SK-N-SH (cell line): ENCODE measurements at regions of chr1 and their contacts with region 1.

Region 1: DNA sequence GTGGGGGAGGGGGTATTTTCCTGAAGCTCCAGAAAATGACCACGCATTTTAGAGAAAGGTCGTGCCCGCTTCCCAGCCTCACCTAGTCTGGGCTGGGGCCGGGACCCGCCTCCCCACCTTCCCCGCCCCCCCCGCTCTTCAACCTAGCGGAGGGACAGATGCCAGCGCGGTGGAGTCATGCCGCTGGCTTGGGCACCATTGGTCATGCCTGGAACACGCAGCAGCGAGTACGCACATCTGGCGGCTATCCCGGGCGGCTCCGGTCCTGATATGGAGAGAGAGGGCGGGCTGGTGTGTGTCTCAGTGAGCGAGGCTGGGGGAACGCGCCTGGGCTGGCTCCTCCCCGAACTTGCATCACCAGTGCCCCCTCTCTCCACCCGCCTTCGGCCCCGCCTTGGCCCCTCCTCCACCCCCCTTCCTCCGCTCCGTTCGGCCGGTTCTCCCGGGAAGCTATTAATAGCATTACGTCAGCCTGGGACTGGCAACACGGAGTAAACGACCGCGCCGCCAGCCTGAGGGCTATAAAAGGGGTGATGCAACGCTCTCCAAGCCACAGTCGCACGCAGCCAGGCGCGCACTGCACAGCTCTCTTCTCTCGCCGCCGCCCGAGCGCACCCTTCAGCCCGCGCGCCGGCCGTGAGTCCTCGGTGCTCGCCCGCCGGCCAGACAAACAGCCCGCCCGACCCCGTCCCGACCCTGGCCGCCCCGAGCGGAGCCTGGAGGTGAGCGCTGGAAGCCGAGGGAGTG is at the start of gene ATF3:
- DNase-seq: peak; percentile 98
- H3K4me3 ChIP-seq: peak within 1 kb of the TSS; percentile 67 to 71
- H3K27ac ChIP-seq: peak within 1 kb of the TSS; percentile 78 to 86
- H3K4me1 ChIP-seq: peaks cover 4 to 32% of the 10 kb centered on the region in 2 experiments; a peak in 2 of 4 replicates
- H3K27me3 ChIP-seq: peaks cover 42% of the 10 kb centered on the region
- CTCF ChIP-seq: no peak
- EP300 ChIP-seq: no peak
- RAD21 ChIP-seq: no peak
- polyA plus RNA-seq, gene ATF3: 29.7 TPM in 2 replicates

Region 2: GRCh38 chr1:212545941-212546635 is 62.3 kb before region 1 on chr1:
- CTCF ChIA-PET with region 1: no interaction called
- POLR2A ChIA-PET with region 1: no interaction called
- DNase-seq: no peak
- H3K4me3 ChIP-seq: no peak overlapping the region
- H3K27ac ChIP-seq: no peak overlapping the region
- H3K4me1 ChIP-seq: no peaks in the 10 kb centered on the region
- H3K27me3 ChIP-seq: no peaks in the 10 kb centered on the region; the same call in 1 of the 2 replicates
- CTCF ChIP-seq: no peak
- EP300 ChIP-seq: no peak
- RAD21 ChIP-seq: no peak

Region 3: DNA sequence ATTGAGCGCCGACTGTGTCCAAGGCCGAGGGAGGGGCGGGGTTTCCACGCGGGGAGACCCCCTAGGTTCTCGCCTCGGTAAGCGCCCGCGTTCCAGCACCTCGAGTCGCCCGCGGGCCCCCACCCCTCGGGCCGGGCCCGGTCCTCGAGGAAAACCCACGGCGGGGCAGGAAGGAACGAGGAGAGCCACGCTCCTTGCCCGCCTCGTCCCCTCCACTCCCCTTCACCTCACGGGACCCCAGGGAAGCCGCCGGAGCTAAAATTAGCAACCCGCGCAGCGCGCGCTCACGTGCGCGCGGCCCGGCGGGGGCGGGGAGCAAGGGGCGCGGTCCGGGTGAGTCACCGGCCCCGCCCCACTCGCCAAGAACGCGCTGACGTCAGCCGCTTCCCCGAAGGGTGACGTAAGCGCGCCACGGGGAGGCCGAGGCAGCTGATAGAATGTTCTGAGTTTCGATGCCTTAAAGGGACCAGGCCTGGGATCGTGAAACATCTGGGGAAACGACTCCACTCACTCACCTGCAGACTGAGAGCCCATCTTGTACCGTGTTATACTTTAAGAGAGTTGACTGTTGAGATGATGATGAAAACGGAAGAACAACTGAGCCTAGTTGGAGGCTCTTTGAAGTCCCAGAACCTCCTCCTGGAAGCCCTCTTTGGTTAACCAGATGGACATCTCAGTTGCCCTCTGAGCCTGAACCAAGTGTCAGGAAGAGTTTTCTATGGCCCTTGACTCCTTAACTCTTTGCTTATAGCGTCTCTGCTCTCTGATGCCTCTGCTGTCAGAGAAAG is 49.5 kb before region 1 on chr1:
- CTCF ChIA-PET with region 1: interaction called, 5 read pairs
- POLR2A ChIA-PET with region 1: interaction called, 17 read pairs
- DNase-seq: peak; percentile 97
- H3K4me3 ChIP-seq: peak overlapping the region; percentile 64 to 78
- H3K27ac ChIP-seq: peak overlapping the region; percentile 37 to 85; a peak in 3 of 4 replicates
- H3K4me1 ChIP-seq: peaks cover 0 to 16% of the 10 kb centered on the region in 2 experiments; a peak in 1 of 4 replicates
- H3K27me3 ChIP-seq: no peaks in the 10 kb centered on the region
- CTCF ChIP-seq: no peak
- EP300 ChIP-seq: no peak; a peak in 1 of 4 replicates
- RAD21 ChIP-seq: no peak

Region 4: DNA sequence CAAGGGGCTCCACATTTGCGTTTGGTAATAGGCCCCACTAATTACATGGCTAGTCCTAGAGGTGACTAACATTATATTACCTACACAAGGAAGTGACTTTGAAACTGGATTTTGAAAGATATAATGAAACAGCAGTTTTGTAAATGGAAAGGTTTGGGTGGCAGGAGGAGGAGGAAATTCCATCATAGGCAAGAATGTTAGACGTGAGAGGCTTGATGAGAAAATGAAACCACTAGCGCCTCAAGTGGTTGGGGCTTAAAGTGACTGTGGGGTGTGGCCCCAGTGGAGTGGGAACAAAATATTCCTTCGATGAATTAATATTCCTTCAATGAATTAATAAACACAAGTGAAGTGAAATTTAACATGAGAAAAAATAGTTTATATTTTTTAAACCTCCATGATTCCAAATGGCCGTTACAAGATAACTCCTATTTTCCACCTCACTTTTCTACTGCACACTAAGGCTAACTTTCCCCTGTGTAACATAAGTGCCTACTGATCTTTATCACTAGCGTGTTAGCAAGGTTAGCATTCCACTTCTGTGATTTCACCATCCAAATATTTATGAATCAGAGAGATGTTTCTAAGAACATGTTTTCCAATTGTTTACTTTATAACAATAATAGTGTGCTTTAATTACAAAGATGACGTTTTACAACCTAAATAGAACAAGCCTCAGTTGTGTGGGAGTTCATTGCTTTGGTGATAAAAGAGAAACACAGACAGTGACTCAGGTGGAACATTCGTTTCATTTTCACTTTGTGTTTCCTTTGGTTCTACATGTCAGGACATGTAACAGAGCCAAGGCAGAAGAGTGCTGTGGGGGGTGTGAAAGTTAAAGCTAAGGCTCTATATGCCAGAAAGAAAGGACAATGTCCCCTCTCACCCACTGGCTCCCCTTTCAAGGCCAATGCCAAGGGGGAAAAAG is 12.3 kb before region 1 on chr1:
- CTCF ChIA-PET with region 1: interaction called, 13 read pairs
- POLR2A ChIA-PET with region 1: interaction called, 5 read pairs
- DNase-seq: no peak
- H3K4me3 ChIP-seq: peak overlapping the region; percentile 7 to 22; a peak in 3 of 4 replicates
- H3K27ac ChIP-seq: peak overlapping the region; percentile 78 to 86
- H3K4me1 ChIP-seq: peaks cover 6 to 27% of the 10 kb centered on the region in 2 experiments; a peak in 3 of 4 replicates
- H3K27me3 ChIP-seq: no peaks in the 10 kb centered on the region; the same call in 1 of the 2 replicates
- CTCF ChIP-seq: peak; percentile 68
- EP300 ChIP-seq: peak in 1 of 2 experiments; percentile 66; a peak in 2 of 4 replicates
- RAD21 ChIP-seq: 0 out of 2 replicates have a peak, but pooled peaks have one; percentile 3

Region 5: DNA sequence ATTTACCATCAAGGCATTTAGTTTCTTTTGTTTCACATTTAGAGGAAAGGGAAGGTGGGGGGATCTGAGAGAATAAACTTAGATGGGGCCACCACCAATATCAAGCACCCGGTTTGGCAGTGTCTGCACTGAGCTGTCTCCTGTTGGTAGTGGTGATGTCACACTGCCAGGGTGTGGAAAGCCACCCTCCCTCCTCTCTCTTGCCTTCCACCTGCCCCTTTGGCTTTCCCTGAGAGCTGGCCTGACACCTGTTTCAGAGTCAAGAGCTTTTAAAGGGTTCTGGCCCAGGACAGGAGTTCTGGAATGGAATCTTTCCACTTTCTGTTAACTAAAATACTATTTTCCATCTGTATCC is 13.5 kb after region 1 on chr1:
- CTCF ChIA-PET with region 1: interaction called, 20 read pairs
- POLR2A ChIA-PET with region 1: interaction called, 4 read pairs
- DNase-seq: no peak
- H3K4me3 ChIP-seq: no peak overlapping the region
- H3K27ac ChIP-seq: no peak overlapping the region
- H3K4me1 ChIP-seq: no peaks in the 10 kb centered on the region
- H3K27me3 ChIP-seq: peaks cover 11% of the 10 kb centered on the region; the same call in 1 of the 2 replicates
- CTCF ChIP-seq: no peak
- EP300 ChIP-seq: no peak
- RAD21 ChIP-seq: no peak

Region 6: GRCh38 chr1:212630158-212630900 is 21.9 kb after region 1 on chr1:
- CTCF ChIA-PET with region 1: interaction called, 14 read pairs
- POLR2A ChIA-PET with region 1: interaction called, 10 read pairs
- DNase-seq: peak; percentile 75
- H3K4me3 ChIP-seq: no peak overlapping the region; a peak in 1 of 4 replicates
- H3K27ac ChIP-seq: no peak overlapping the region
- H3K4me1 ChIP-seq: peaks cover 0 to 20% of the 10 kb centered on the region in 2 experiments; a peak in 2 of 4 replicates
- H3K27me3 ChIP-seq: peaks cover 55% of the 10 kb centered on the region
- CTCF ChIP-seq: peak; percentile 70
- EP300 ChIP-seq: no peak
- RAD21 ChIP-seq: peak; percentile 62

Region 7: DNA sequence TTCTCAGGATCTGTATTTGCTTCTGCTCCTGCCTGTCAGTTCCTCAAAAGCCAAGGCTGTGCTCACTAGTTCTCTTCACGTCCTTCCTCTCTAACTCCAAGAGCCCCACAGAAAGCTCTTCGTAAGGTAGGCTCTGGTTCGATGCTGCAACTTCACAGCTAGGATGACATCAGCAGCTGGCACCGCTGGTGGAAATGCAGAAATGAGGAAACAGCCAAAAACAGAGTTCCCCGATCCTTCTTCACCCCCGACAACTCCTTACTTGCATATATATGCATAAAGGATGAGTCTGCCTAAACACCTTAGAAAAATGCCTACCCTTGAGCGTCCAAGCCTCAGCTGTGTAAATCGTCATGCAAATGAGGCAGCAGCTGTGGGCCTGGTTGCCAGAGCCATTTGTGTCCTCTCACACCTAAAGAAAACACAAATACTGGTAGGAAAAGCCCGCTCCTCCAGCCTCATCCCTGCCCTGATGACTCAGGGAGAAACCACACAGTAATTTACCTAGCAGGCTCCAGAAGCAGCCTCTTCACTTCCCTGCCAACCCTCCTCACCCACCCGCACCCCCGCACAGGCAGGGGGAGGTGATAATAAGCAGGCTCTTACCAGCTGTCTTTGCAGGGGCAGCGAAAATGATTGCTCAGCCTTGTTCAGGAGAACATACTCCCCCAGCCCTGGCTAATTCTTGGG is 63.1 kb after region 1 on chr1:
- CTCF ChIA-PET with region 1: interaction called, 24 read pairs
- POLR2A ChIA-PET with region 1: interaction called, 41 read pairs
- DNase-seq: peak; percentile 40
- H3K4me3 ChIP-seq: no peak overlapping the region
- H3K27ac ChIP-seq: peak overlapping the region in 1 of 2 experiments; percentile 44; a peak in 1 of 4 replicates
- H3K4me1 ChIP-seq: peaks cover 29 to 46% of the 10 kb centered on the region in 2 experiments
- H3K27me3 ChIP-seq: no peaks in the 10 kb centered on the region
- CTCF ChIP-seq: no peak
- EP300 ChIP-seq: peak in 1 of 2 experiments; percentile 44; a peak in 2 of 4 replicates
- RAD21 ChIP-seq: no peak

Region 8: DNA sequence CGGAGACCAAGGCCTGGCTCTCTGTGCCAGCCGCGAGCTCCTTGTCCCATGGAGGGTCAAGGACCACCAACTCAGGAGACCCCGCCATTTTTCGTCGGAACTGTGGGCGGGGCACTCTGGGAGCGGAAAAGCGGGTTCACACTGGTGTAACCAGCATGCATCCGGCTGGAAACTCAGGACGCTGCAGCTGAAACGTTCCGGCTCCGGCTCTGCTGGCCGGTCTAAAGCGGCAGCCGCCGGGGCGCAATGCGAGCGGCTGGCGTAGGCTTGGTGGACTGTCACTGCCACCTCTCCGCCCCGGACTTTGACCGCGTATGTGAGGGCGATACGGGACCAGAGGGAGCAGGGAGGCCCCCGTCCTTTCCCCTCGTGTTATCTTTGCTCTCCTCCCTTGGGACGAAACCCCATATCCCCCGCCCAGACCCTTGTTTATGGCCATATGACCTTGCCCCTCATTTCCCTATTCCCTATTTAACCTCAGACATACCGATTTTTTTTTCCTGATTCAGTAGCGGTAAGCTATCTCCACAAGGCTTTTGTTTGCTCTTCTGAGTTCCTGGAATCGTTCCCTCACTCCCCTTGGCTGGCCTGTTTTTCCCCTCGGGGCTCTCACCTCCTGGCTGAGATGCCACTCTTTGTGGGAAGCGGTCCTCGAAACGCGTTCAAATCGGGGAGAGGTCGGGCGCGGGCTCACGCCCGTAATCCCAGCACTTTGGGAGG is 183.5 kb after region 1 on chr1 and contains the starts of genes NSL1 and TATDN3:
- CTCF ChIA-PET with region 1: no interaction called
- POLR2A ChIA-PET with region 1: interaction called, 11 read pairs
- DNase-seq: peak; percentile 85
- H3K4me3 ChIP-seq: peak within 1 kb of the TSS; percentile 77 to 98
- H3K27ac ChIP-seq: peak within 1 kb of the TSS; percentile 86 to 88
- H3K4me1 ChIP-seq: peaks cover 2 to 3% of the 10 kb centered on the region in 2 experiments; a peak in 2 of 4 replicates
- H3K27me3 ChIP-seq: no peaks in the 10 kb centered on the region
- CTCF ChIP-seq: no peak
- EP300 ChIP-seq: peak in 1 of 2 experiments; percentile 46; a peak in 1 of 4 replicates
- RAD21 ChIP-seq: 0 out of 2 replicates have a peak, but pooled peaks have one; percentile 7
- polyA plus RNA-seq, gene NSL1: 17.8 and 22.5 TPM in 2 replicates
- polyA plus RNA-seq, gene TATDN3: 5.2 and 6.6 TPM in 2 replicates